Activated CD4-positive, alpha-beta T cell treated with anti-CD3 and anti-CD28 coated beads for 36 hours (primary cell): ENCODE measurements at regions of chr14 and their contacts with region 1.

Region 1: GRCh38 chr14:103847451-103848188 is at the start of gene PPP1R13B:
- DNase-seq: peak; percentile 97
- ATAC-seq: peak; percentile 98
- H3K4me3 Mint-ChIP-seq: peak within 1 kb of the TSS; percentile 76
- H3K27ac Mint-ChIP-seq: peak within 1 kb of the TSS; percentile 38
- H3K4me1 Mint-ChIP-seq: peaks cover 16% of the 10 kb centered on the region
- H3K27me3 Mint-ChIP-seq: peaks cover 5% of the 10 kb centered on the region
- total RNA-seq, gene PPP1R13B: 9.3 to 10.3 TPM

Region 2: DNA sequence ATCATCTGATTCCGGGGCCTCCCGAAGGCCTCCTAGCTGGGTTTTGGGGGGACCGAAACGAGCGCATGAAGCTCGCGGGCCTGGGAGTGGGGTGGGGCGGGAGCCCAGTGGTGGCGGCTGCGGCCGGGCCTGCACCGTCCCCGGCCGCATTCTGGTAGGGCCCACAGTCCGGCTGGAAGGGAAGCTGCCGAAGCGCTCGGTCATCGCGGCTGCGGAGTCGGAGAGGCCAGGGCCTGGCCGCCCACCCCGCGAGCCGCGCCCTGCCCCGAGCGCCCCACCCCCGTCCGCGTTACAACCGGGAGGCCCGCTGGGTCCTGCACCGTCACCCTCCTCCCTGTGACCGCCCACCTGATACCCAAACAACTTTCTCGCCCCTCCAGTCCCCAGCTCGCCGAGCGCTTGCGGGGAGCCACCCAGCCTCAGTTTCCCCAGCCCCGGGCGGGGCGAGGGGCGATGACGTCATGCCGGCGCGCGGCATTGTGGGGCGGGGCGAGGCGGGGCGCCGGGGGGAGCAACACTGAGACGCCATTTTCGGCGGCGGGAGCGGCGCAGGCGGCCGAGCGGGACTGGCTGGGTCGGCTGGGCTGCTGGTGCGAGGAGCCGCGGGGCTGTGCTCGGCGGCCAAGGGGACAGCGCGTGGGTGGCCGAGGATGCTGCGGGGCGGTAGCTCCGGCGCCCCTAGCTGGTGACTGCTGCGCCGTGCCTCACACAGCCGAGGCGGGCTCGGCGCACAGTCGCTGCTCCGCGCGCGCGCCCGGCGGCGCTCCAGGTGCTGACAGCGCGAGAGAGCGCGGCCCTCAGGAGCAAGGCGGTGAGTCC is 218.7 kb before region 1 on chr14 and contains the start of gene KLC1:
- CTCF ChIA-PET with region 1: no interaction called
- POLR2A ChIA-PET with region 1: no interaction called
- intact Hi-C with region 1: loop called in 1 of 2 experiments (anchors 1 kb)
- DNase-seq: peak; percentile 92
- ATAC-seq: peak; percentile 77
- H3K4me3 Mint-ChIP-seq: peak within 1 kb of the TSS; percentile 87
- H3K27ac Mint-ChIP-seq: peak within 1 kb of the TSS; percentile 81
- H3K4me1 Mint-ChIP-seq: peaks cover 35% of the 10 kb centered on the region
- H3K27me3 Mint-ChIP-seq: no peaks in the 10 kb centered on the region
- total RNA-seq, gene KLC1: 97.4 to 113 TPM

Region 3: DNA sequence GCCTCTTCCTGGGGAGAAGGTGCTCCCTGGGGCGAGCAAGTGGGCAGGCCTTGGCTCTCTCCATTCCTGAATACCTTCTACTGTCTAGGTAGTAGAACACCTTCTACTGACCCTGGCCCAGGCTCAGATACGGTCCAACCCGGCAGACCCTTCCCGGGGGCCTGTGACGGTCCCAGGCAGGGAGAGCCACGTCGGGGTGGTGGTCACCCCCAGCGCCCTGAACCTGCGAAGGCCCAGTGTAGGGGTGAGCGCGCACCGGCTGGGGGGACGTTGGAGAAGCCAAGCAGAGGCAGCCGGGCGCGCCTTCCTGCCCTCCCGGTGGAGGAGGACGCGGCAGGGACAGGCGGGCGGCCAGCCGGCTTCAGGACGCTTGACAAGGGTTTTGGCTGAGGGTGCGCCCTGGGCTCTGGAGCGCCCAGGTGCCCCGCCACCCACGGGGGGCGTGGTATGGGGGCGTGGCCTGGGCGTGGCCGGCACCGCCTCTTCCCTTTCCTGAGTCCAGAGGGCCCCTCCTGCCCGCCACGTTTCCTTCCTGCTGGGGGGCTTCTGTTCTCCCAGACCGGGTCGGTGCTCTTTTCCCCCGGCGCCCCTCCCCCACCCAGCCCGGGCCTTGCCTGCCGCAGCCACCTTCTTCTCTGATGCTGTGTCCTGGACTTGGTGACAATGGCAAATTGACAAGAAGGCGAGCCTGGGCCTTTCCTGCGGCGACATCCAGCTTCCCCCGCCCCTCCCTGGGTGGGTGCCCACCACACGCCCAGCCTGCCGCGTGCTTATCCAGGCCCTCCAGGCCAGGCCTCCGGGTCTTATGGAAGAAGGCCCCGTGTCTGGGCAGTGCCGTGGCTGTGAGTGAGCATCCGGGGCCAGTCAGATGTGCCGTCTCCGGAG is 24.2 kb after region 1 on chr14:
- CTCF ChIA-PET with region 1: no interaction called
- POLR2A ChIA-PET with region 1: no interaction called
- intact Hi-C with region 1: loop called in 1 of 2 experiments (anchors 1 kb)
- DNase-seq: peak; percentile 85
- ATAC-seq: peak; percentile 86
- H3K4me3 Mint-ChIP-seq: peak overlapping the region; percentile 79
- H3K27ac Mint-ChIP-seq: peak overlapping the region; percentile 79
- H3K4me1 Mint-ChIP-seq: peaks cover 12% of the 10 kb centered on the region
- H3K27me3 Mint-ChIP-seq: no peaks in the 10 kb centered on the region

Region 4: GRCh38 chr14:103904493-103905107 is 57.0 kb after region 1 on chr14:
- CTCF ChIA-PET with region 1: interaction called, 15 read pairs
- POLR2A ChIA-PET with region 1: no interaction called
- intact Hi-C with region 1: no loop called
- DNase-seq: no peak
- ATAC-seq: no peak
- H3K4me3 Mint-ChIP-seq: no peak overlapping the region
- H3K27ac Mint-ChIP-seq: no peak overlapping the region
- H3K4me1 Mint-ChIP-seq: peaks cover 12% of the 10 kb centered on the region
- H3K27me3 Mint-ChIP-seq: no peaks in the 10 kb centered on the region

Region 5: DNA sequence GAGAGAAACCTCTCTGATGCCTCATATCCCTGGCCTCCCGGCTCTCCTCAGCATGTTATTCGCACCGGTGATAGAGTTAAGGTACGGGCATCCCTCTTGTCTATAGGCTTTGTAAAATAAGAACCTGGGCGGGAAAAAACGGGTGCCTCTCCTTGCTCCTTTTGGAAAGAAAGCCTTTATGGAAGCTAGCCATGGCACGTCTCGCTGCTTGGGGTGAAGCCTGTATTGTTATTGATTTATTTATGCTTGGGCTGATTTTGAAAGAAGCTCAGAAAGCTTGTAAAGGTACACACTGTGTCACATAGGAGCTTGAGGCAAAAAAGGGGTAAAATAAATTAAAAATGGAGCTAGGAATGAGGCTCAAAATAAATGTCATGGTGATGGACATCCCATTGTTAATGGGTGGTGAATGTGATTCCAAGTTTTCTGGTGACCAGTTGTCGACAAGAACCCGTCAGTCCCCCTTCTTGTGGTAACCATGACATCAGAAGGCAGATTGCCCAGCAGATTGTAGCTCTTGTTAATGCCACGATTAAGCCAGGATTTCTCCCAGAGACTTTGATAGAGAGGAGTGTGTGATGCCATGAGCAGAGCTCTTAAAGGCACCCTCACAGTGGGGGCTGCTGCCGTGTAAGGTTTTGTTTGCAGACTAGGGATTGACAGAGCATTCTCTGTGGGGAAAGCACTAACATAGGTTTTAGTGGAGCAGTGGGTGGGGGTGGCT is 187.5 kb after region 1 on chr14:
- CTCF ChIA-PET with region 1: no interaction called
- POLR2A ChIA-PET with region 1: no interaction called
- intact Hi-C with region 1: no loop called
- DNase-seq: no peak
- ATAC-seq: no peak
- H3K4me3 Mint-ChIP-seq: no peak overlapping the region
- H3K27ac Mint-ChIP-seq: no peak overlapping the region
- H3K4me1 Mint-ChIP-seq: no peaks in the 10 kb centered on the region
- H3K27me3 Mint-ChIP-seq: peaks cover 15% of the 10 kb centered on the region

Region 6: GRCh38 chr14:104224506-104225277 is 377.1 kb after region 1 on chr14:
- CTCF ChIA-PET with region 1: no interaction called
- POLR2A ChIA-PET with region 1: no interaction called
- intact Hi-C with region 1: no loop called
- DNase-seq: peak; percentile 69
- ATAC-seq: no peak
- H3K4me3 Mint-ChIP-seq: no peak overlapping the region
- H3K27ac Mint-ChIP-seq: no peak overlapping the region
- H3K4me1 Mint-ChIP-seq: peaks cover 17% of the 10 kb centered on the region
- H3K27me3 Mint-ChIP-seq: peaks cover 12% of the 10 kb centered on the region